ENCODE measurements at regions of chr4 and their contacts with region 1.

Region 1: GRCh38 chr4:37452952-37453280 is 208.4 kb downstream of the NWD2 start:
- DNase-seq: peak; percentile 89
- H3K4me3 Mint-ChIP-seq: peak overlapping the region; percentile 71
- H3K27ac Mint-ChIP-seq: no peak overlapping the region
- H3K4me1 Mint-ChIP-seq: no peaks in the 10 kb centered on the region
- H3K27me3 Mint-ChIP-seq: peaks cover 23% of the 10 kb centered on the region
- CTCF ChIP-seq: peak; percentile 56

Region 2: GRCh38 chr4:37441276-37441994 is 11.5 kb before region 1 on chr4:
- CTCF ChIA-PET with region 1: interaction called, 13 read pairs
- POLR2A ChIA-PET with region 1: interaction called, 3 read pairs
- intact Hi-C with region 1: no loop called
- DNase-seq: peak; percentile 16
- H3K4me3 Mint-ChIP-seq: no peak overlapping the region
- H3K27ac Mint-ChIP-seq: no peak overlapping the region
- H3K4me1 Mint-ChIP-seq: no peaks in the 10 kb centered on the region
- H3K27me3 Mint-ChIP-seq: no peaks in the 10 kb centered on the region
- CTCF ChIP-seq: no peak

Region 3: GRCh38 chr4:37561803-37562207 is 108.9 kb after region 1 on chr4:
- CTCF ChIA-PET with region 1: interaction called, 60 read pairs
- POLR2A ChIA-PET with region 1: no interaction called
- intact Hi-C with region 1: loop called (anchors 1 kb)
- DNase-seq: peak; percentile 51
- H3K4me3 Mint-ChIP-seq: no peak overlapping the region
- H3K27ac Mint-ChIP-seq: no peak overlapping the region
- H3K4me1 Mint-ChIP-seq: no peaks in the 10 kb centered on the region
- H3K27me3 Mint-ChIP-seq: no peaks in the 10 kb centered on the region
- CTCF ChIP-seq: no peak

Region 4: GRCh38 chr4:37686373-37687193 is 233.7 kb after region 1 on chr4 and contains the start of gene RELL1:
- CTCF ChIA-PET with region 1: no interaction called
- POLR2A ChIA-PET with region 1: no interaction called
- intact Hi-C with region 1: loop called (anchors 2 kb)
- DNase-seq: peak; percentile 99
- H3K4me3 Mint-ChIP-seq: peak within 1 kb of the TSS; percentile 85
- H3K27ac Mint-ChIP-seq: peak within 1 kb of the TSS; percentile 92
- H3K4me1 Mint-ChIP-seq: peaks cover 29% of the 10 kb centered on the region
- H3K27me3 Mint-ChIP-seq: no peaks in the 10 kb centered on the region
- CTCF ChIP-seq: no peak
- total RNA-seq, gene RELL1: 28.6 and 34.0 TPM in 2 replicates

Region 5: DNA sequence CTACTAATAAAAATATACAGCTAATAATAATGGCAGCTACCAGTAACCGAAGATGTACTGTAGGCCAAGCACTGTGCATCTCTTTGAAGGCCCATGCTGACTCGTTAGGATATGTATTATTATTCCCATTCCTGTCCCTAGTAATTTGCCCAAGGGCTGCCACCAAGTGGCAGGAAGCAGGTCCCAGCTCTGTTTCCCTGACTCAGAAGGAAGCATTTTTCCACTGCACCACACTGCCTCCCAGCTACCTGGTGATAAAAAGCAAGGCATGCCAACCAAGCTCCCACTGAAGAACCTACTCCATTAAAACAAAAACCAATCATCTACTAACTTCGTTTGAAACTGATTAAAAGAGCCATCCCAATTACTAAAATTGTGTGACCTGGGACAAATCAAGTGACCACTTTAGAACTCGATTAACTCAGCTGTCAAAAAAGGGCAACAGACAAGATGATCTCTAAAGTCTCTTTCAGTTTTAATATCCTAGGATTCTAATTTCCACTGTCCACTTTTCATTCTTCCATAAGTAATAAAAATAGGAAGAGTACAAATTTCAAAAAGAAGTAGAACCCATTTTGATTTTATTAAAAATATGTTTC is 349.3 kb after region 1 on chr4:
- CTCF ChIA-PET with region 1: interaction called, 5 read pairs
- POLR2A ChIA-PET with region 1: interaction called, 4 read pairs
- intact Hi-C with region 1: loop called (anchors 1 kb)
- DNase-seq: peak; percentile 87
- H3K4me3 Mint-ChIP-seq: no peak overlapping the region
- H3K27ac Mint-ChIP-seq: no peak overlapping the region
- H3K4me1 Mint-ChIP-seq: peaks cover 10% of the 10 kb centered on the region
- H3K27me3 Mint-ChIP-seq: no peaks in the 10 kb centered on the region
- CTCF ChIP-seq: peak; percentile 53